Gastrocnemius medialis (tissue), 4 donors: ENCODE measurements at regions of chr7 and their contacts with region 1.

Region 1: DNA sequence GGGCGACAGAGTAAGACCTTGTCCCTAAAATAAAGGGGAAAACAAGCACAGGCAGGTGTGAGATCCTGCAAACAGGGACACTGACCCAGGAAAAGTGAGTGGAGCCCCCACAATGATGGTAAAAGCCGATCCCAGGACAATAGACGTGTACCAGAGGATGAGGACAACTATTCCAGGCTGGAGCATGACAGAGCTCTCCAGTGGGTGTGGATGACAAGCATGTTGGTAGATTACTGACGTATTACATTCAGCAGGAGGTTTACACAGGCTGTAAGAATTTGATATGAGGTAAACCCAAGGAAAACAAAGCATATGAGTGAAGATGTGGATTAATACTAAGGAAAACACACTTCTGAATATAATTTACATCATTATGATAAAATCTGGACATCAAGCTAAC is 27.8 kb upstream of the SMURF1 start:
- DNase-seq: no peak
- ATAC-seq: no peak
- H3K4me3 ChIP-seq: no peak overlapping the region
- H3K27ac ChIP-seq: no peak overlapping the region
- H3K4me1 ChIP-seq: no peaks in the 10 kb centered on the region
- H3K27me3 ChIP-seq: no peaks in the 10 kb centered on the region
- CTCF ChIP-seq: no peak
- POLR2A ChIP-seq: no peak

Region 2: DNA sequence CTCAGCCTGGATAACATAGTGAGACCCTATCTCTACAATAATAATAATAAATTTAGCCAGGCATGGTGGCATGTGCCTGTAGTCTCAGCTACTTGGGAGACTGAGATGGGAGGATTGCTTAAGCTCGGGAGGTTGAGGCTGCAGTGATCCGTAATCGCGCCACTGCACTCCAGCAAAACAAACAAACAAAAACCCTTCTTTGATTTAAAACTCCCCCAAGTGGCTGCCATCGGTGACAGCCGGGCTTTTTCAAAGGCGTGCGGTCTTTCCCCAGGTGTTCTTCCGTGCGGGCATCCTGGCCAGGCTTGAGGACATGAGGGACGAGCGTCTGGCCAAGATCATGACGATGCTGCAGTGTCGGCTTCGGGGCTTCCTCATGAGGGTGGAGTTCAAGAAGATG is 99.0 kb after region 1 on chr7:
- in situ Hi-C with region 1: no loop called
- intact Hi-C with region 1: loop called (anchors 10 kb)
- DNase-seq: no peak
- ATAC-seq: no peak
- H3K4me3 ChIP-seq: no peak overlapping the region
- H3K27ac ChIP-seq: no peak overlapping the region
- H3K4me1 ChIP-seq: no peaks in the 10 kb centered on the region
- H3K27me3 ChIP-seq: no peaks in the 10 kb centered on the region
- CTCF ChIP-seq: no peak
- POLR2A ChIP-seq: no peak